Testis (tissue), 5 donors: ENCODE measurements at regions of chr10 and their contacts with region 1.

Region 1: DNA sequence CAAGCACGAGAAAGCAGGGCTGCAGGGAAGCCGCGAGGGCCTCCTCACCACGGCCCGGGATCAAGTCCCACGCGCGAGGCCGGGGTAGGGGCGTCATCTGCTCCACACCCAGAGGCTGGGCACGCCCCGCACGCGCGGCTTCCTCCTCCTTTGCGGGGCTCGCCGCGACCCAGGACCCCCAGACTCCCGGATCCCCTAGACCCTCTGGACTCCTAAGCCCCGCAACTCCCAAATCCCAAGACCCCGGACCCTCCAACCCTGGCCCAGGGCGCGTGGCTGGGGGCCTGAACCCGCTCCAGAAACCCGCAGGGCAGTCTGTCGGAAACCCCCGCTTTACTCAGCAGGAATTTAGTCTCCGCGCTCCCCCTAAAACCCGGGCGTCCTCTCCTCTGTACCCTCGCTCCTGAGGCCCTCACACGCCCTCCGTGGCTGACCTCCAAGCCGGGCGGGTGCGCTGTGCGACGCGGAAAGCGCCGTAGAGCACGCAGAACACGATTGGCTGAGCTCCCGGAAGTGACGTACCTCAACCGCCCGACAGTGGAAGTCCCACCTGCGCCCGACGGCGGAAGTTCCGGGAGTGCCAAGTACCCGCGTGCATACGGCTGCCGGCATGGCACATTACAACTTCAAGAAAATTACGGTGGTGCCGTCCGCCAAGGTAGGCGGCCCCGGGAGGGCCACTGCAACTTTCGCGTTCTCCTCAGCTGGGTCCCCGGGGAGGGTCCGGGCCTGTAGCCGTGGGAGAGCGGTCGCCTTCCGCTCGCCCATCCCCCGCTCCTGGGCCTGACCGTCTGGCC is at the start of gene GTPBP4:
- DNase-seq: peak; percentile 100
- H3K4me3 ChIP-seq: peak within 1 kb of the TSS; percentile 95 to 96
- H3K27ac ChIP-seq: peak within 1 kb of the TSS; percentile 87 to 92
- H3K4me1 ChIP-seq: peaks cover 7% of the 10 kb centered on the region
- H3K27me3 ChIP-seq: no peaks in the 10 kb centered on the region
- CTCF ChIP-seq: peak in 1 of 3 experiments; percentile 24
- POLR2A ChIP-seq: no peak
- total RNA-seq, gene GTPBP4: 54.9 to 57.2 TPM

Region 2: GRCh38 chr10:931416-932318 is 56.4 kb before region 1 on chr10 and contains the start of gene LARP4B:
- intact Hi-C with region 1: loop called (anchors 5 kb)
- DNase-seq: peak; percentile 96
- H3K4me3 ChIP-seq: peak within 1 kb of the TSS; percentile 88 to 96
- H3K27ac ChIP-seq: peak within 1 kb of the TSS; percentile 97 to 99
- H3K4me1 ChIP-seq: peaks cover 9% of the 10 kb centered on the region
- H3K27me3 ChIP-seq: no peaks in the 10 kb centered on the region
- CTCF ChIP-seq: no peak
- POLR2A ChIP-seq: peak; percentile 13
- total RNA-seq, gene LARP4B: 95.3 to 98.6 TPM